Upper lobe of right lung (tissue), 1 donor: ENCODE measurements at regions of chr1 and their contacts with region 1.

Region 1: DNA sequence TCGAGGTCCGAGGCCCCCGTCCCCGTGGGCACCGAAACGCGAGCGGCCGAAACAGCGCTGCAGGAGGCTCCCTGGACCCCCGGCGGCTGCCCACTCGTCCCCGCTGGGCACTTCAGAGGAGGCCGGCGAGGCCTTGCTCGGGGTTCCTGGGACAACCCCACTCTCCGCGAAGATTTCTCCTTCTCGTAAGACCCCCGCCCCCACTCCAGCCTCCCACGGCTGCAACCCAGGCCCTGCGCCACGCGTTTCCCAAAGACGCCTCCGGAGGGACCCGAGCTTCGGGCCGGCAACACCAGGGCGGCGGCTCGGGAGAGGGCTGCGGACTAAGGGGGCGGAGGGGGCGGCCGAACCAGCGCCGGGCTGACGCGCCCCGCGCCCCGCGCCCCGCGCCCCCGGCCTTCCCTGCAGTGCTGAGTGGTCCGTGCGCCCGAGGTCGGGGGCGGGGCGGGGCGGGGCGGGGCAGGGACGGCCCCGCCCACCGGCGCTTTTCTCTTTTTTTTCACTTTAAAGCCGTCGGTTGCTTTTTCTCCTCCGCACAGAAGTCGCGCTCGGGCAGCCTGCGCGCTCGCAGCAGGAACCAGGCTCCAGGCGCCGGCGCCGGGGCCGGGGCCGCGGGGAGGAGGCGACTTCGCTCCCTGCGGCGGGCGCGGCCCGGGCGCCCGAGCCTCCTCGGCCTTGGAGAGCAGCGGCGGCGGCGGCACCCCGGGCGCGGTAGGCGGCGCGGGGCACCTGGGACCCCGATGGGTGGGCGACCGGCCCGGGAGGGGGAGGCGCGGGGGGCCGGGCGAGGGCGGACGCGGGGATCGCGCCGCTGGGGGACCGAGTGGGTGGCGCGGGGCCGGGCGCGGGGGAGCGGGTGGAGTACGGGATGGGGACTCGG is at the start of gene SPSB1:
- DNase-seq: peak; percentile 87
- ATAC-seq: peak; percentile 74
- H3K4me3 ChIP-seq: peak within 1 kb of the TSS; percentile 87
- H3K27ac ChIP-seq: peak within 1 kb of the TSS; percentile 86
- H3K4me1 ChIP-seq: peaks cover 36% of the 10 kb centered on the region
- H3K27me3 ChIP-seq: no peaks in the 10 kb centered on the region
- CTCF ChIP-seq: peak; percentile 5
- total RNA-seq, gene SPSB1: 29.0 TPM

Region 2: DNA sequence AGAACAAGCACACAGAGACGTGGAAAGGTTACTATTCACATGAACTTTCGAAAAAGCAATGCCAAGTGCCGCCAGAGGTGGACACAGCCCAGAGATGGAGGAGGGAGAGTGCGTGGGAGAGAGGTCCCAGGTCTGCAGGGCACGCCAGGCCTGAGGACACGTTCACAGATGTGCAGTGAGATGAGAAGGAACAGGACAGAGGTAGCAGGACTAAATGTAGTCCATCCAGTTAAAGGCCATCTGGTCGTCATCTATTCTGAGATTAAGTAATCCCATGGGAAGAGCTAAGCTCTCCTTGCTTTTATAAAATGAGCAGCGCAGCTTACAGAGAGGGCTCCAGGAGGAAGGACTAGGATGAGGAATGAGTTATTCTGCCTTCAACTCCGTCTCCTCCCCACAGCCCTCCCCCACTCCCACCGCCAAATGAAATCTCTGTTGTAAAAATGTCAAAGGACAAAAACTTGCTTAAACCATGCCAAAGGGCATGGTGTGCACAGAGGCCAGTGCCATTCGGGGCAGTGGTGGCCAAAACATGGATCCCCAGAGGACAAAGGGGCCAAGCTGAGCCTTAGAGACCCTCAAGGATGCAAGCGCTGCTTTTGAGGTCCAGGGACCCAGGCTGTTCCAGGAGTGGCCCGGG is 161.3 kb after region 1 on chr1:
- intact Hi-C with region 1: loop called (anchors 5 kb)
- DNase-seq: no peak
- ATAC-seq: no peak
- H3K4me3 ChIP-seq: no peak overlapping the region
- H3K27ac ChIP-seq: no peak overlapping the region
- H3K4me1 ChIP-seq: no peaks in the 10 kb centered on the region
- H3K27me3 ChIP-seq: no peaks in the 10 kb centered on the region
- CTCF ChIP-seq: no peak

Region 3: DNA sequence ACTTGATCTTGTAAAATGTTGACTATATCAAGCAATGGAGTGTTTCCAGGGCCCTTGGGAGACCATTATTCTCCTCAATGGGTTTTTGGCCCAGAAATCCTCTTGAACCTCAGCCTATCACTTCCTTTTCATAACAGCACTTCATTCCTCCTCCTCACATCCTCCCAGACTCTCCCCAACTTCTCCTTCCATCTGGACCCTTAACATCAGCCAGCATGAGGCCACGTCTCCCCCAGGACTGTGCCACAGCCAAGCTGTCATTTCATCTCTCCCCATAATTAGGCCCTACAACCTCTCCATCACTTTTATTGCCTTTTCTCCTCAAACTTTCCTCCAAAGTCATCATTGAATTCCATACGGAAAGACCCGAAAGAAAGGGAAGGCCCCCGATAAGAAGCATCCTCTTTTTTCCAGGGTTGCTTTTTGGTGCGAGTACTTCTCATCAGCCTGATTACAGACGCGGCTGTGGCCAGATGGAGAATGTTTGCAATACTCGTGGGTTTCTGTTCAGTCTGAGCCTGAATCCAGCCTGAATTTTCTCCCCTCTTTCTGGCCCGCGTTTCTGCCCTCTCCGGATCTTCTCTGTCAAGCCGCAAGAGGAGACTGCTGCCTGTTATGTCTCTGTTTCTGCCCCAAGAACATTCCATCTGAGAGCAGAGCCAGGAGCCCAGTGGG is 194.0 kb after region 1 on chr1:
- intact Hi-C with region 1: loop called (anchors 10 kb)
- DNase-seq: no peak
- ATAC-seq: no peak
- H3K4me3 ChIP-seq: no peak overlapping the region
- H3K27ac ChIP-seq: no peak overlapping the region
- H3K4me1 ChIP-seq: no peaks in the 10 kb centered on the region
- H3K27me3 ChIP-seq: peaks cover 5% of the 10 kb centered on the region
- CTCF ChIP-seq: no peak